AG04449 (cell line): ENCODE measurements at regions of chr2 and their contacts with region 1.

Region 1: DNA sequence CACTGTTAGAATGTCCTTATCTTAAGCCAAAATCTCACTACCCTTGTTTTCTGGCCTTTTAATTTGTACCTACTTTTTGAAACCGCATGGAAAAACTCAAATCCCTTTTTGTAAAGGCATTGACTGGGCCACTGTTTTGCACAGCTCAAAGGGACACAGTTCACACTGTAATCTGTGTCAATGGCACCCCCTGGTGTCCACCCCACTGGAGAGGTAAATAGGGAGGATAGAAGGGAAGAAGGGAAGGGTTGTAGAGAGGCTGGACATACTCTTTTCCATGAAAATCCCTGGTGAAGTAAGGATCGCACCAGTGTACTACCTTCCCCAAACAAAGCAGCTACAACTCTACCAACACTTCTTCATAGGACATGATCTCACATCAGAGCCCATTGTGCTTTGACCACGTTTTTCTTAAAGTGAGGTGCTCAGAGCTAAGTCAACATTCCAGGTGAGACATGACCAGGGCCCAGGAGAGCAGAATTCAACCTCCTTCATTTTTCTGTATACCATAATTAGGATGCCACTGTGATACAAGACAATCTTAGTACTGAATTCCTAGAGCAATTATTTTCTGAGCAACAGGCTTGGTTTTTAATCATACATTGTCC is 92.4 kb upstream of the RMDN2 start:
- DNase-seq: no peak
- H3K4me3 ChIP-seq: no peak overlapping the region
- CTCF ChIP-seq: peak; percentile 73

Region 2: GRCh38 chr2:37389989-37390765 is 442.5 kb before region 1 on chr2:
- CTCF ChIA-PET with region 1: interaction called, 32 read pairs
- POLR2A ChIA-PET with region 1: no interaction called
- DNase-seq: no peak
- H3K4me3 ChIP-seq: no peak overlapping the region; the same call in 1 of the 2 replicates
- CTCF ChIP-seq: no peak

Region 3: DNA sequence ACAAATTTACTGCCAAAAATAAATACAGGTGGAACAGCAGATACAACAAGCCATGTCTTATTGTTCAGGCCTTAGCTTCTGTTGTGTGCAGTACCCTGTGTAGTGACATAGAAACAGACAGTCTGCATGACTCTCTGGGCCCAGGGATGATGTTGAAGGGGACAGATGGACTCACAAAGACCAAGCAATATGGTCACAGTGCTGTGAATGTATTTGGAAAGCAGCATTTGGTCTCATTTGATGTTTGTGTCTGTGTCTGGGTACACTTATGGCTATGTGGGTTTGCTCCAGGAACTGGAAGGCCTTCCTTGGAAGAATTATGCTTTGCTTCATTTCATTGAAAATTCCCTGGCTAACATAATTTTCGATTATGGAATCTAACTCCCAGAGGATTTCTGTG is 319.7 kb before region 1 on chr2:
- CTCF ChIA-PET with region 1: no interaction called
- POLR2A ChIA-PET with region 1: no interaction called
- DNase-seq: no peak
- H3K4me3 ChIP-seq: no peak overlapping the region
- CTCF ChIP-seq: no peak

Region 4: GRCh38 chr2:37648331-37649011 is 184.2 kb before region 1 on chr2:
- CTCF ChIA-PET with region 1: interaction called, 17 read pairs
- POLR2A ChIA-PET with region 1: interaction called, 3 read pairs
- DNase-seq: no peak
- H3K4me3 ChIP-seq: no peak overlapping the region
- CTCF ChIP-seq: no peak

Region 5: DNA sequence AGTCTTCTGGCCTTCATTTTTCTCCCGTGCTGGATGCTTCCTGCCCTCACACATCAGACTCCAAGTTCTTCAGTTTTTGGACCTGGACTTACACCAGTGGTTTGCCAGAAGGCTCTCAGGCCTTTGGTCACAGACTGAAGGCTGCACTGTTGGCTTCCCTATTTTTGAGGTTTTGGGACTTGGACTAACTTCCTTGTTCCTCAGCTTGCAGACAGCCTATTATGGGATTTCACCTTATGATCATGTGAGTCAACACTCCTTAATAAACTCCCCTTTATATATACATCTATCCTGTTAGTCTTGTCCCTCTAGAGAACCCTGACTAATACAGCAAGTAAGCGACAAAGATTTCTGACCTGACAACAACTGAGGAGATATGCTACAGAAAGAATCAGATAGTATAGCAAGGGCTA is 168.5 kb before region 1 on chr2:
- CTCF ChIA-PET with region 1: interaction called, 22 read pairs
- POLR2A ChIA-PET with region 1: interaction called, 20 read pairs
- DNase-seq: no peak
- H3K4me3 ChIP-seq: peak overlapping the region; percentile 40
- CTCF ChIP-seq: no peak

Region 6: DNA sequence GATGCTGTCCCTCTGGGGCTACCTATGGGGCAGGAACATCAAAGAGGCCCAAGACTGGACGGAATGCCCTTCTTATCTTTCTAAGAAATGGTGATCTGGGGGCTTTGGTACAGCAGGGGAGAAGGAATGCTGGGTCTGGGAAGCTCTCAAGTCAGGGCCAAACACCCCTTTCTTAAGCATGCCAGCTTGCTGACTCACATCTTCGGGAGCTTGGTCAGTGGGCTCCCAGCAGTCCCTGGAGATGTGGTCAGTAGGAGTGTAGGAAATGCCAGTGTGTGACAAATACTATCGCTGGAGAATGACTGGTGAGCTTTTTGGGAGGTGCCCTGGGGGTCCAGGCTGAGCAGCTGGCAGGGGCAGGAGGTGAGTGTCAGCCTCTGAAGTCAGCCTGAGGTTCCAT is 56.2 kb before region 1 on chr2:
- CTCF ChIA-PET with region 1: interaction called, 14 read pairs
- POLR2A ChIA-PET with region 1: interaction called, 4 read pairs
- DNase-seq: peak; percentile 87
- H3K4me3 ChIP-seq: no peak overlapping the region
- CTCF ChIP-seq: no peak

Region 7: GRCh38 chr2:37843556-37843955 is 10.9 kb after region 1 on chr2:
- CTCF ChIA-PET with region 1: interaction called, 11 read pairs
- POLR2A ChIA-PET with region 1: no interaction called
- DNase-seq: no peak
- H3K4me3 ChIP-seq: no peak overlapping the region
- CTCF ChIP-seq: no peak